KBM-7 (cell line): ENCODE measurements at regions of chr12 and their contacts with region 1.

Region 1: DNA sequence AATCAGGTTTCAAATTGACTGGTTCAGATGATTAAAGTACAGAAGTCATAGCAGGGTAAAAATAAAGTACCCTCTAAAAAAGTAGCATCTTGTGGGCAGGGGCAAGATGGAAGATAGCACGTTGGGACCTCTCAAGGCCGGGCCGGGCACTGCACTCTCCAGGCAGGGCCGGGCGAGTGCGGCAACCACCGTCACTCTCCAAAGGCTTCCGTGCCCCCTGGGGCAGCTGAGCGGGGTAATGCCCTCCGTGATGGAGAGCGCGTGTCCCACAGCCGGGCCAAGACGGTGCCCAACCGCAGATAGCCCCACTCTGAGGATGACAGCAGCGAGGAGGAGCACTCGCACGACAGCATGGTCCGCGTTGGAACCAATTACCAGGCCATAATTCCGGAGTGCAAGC is 8.6 kb upstream of the PLXNC1 start:
- DNase-seq: no peak

Region 2: GRCh38 chr12:94254270-94254669 is 114.5 kb after region 1 on chr12:
- in situ Hi-C with region 1: no loop called
- DNase-seq: no peak

Region 3: DNA sequence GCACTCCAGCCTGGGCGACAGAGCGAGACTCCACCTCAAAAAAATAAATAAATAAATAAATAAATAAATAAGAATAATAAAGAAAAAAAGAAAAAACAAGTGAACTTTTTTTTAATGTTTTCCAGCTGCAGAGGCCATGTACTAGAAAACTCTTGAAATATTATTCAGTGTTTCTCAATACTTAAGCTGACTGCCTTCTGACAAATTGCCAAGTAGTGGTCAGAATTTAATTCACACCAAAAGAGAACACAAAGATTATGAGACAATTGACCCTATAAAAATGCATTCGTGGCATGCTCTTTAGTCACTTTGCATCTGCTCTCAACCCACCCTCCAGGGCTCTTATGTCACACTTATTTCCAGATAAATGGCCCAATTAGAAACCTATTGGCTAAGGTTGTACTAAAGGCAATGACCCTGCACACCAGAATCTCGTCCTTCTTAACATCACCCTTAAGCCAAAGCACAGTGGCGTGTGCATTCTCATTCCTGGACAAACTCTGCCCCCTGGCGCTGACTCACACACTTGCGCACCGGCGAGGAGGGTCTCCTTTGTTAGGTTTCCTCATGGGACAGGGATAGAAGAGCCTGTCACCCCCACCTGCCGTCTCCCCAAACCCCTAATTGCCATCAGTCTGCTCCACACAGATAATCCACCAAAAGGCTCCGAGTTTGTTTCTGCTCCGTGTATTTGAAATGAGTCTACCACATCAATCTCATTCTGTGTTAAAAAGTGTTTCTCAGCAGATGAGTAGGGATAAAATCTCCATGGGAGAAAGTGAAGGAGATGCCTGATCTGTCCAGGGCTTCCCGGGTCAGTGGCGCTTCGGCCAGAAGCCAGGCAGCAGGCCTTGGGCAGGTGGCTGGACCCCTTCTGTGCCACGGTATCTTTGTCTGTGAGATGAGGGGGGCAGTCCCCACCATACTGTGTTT is 392.9 kb after region 1 on chr12:
- in situ Hi-C with region 1: loop called (anchors 5 kb)
- DNase-seq: peak; percentile 81

Region 4: DNA sequence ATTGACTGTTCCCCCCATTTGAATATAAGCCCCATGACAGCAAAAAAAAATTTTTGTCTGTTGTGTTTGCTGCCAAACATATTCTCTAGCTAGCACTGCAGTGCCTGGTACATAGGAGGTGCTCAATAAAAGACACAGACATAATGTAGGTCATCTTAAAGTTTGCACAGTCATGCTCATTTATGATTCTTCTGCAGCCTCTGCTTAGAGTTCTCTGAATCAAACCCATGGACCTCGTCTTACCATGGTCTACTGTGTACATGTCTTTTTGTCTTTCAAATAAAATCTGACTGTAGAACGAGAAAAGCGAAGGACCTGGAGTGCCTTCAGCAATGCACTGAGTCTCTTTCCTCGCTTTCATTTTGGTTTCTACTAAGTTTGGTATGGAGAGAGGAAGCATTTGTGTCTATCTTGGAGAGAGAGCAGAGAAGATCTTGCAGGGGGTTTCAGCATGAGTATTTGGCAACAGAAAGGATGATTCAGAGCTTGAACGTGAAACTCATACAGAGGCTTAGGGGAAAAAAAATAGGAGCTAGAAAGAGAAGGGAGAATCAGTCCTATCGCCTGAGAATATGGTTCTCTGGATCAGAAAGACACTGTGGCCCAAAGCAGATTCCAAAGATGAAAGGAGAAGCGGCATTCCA is 549.3 kb after region 1 on chr12:
- in situ Hi-C with region 1: no loop called
- DNase-seq: no peak